Activated naive CD4-positive, alpha-beta T cell treated with anti-CD3 and anti-CD28 coated beads for 36 hours (primary cell): ENCODE measurements at regions of chr3 and their contacts with region 1.

Region 1: DNA sequence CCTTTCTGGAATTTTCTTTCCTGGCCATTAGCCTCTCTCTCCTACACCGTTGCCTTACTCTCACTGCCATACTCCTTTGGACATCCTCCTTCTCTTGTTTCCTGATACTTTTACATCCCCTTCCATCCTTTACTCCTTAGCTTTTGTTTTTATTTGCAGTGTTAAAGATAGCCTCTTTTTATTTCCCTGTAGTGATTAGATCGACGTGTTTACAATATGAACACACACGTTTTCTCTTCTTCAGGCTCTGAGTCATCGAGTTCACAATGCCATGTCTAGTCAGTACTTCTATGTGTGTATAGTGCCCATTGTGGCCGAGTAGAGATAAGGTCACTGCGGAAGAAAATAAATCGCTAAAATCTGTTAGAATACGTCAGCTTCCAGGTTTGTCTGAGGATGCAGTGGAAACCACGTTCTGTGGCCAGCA is 208.5 kb downstream of the LPP start:
- DNase-seq: no peak
- H3K4me3 Mint-ChIP-seq: no peak overlapping the region
- H3K27ac Mint-ChIP-seq: no peak overlapping the region
- H3K4me1 Mint-ChIP-seq: peaks cover 40% of the 10 kb centered on the region
- H3K27me3 Mint-ChIP-seq: no peaks in the 10 kb centered on the region

Region 2: DNA sequence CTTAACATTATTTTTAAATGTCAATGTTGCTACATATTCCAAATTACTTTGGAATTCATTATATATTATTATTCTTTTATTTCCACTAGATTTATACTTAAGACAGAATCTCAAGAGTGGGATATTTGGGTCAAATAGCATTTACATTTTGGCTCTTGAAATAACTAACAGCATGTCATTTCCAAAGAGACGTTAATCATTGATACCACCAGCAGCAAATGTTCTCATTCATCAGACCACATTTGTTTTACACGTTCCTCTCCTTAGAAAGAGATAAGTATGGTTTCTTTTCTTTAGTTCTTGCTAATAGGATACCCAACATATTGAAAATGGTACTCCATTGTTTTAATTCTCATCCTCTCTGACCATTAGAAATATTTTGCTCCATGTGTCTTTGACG is 21.3 kb after region 1 on chr3:
- CTCF ChIA-PET with region 1: no interaction called
- intact Hi-C with region 1: loop called (anchors 2 kb)
- DNase-seq: no peak
- H3K4me3 Mint-ChIP-seq: no peak overlapping the region
- H3K27ac Mint-ChIP-seq: no peak overlapping the region
- H3K4me1 Mint-ChIP-seq: peaks cover 15% of the 10 kb centered on the region
- H3K27me3 Mint-ChIP-seq: no peaks in the 10 kb centered on the region

Region 3: GRCh38 chr3:188389711-188390342 is 27.4 kb after region 1 on chr3:
- CTCF ChIA-PET with region 1: no interaction called
- intact Hi-C with region 1: loop called (anchors 1 kb)
- DNase-seq: peak; percentile 85
- H3K4me3 Mint-ChIP-seq: no peak overlapping the region
- H3K27ac Mint-ChIP-seq: peak overlapping the region; percentile 67
- H3K4me1 Mint-ChIP-seq: peaks cover 39% of the 10 kb centered on the region
- H3K27me3 Mint-ChIP-seq: no peaks in the 10 kb centered on the region